ENCODE measurements at regions of chr1 and their contacts with region 1.

Region 1: DNA sequence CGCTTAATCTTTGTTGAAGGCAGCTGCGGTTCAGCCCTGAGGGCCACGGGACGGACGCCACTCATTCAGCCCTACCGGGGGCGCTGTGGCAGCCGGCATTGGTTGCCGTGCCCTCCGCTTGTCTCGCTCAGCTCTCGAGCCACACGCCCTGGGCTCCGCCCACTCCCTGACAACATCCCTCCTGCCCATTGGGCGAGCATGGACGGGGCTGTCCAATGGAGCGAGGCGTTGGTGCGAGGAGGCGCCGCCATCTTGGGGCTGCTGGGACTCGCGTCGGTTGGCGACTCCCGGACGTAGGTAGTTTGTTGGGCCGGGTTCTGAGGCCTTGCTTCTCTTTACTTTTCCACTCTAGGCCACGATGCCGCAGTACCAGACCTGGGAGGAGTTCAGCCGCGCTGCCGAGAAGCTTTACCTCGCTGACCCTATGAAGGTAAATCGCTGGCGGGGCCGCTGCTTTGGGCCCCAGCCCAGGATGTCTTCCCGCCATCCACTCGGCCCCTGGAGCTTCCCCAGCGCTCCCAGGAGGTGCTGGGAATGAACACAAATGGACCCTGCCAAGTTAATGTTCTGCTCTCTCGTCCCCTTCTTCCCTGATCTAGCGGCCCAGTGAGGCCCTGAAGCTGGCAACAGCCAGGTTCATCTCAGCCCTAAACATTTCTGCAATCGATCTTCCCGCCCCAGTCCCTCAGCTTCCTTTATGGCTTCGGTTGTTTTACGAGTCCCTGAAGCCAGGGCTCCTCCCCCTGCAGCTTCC is at the start of gene SRP9:
- DNase-seq: peak; percentile 92 to 98
- ATAC-seq: peak; percentile 99 to 100
- H3K4me3 ChIP-seq: peak within 1 kb of the TSS; percentile 85
- H3K27ac ChIP-seq: peak within 1 kb of the TSS; percentile 93 to 97
- H3K4me1 ChIP-seq: peaks cover 46% of the 10 kb centered on the region
- CTCF ChIP-seq: peak; percentile 82
- EP300 ChIP-seq: no peak
- POLR2A ChIP-seq: no peak; the same call in 1 of the 2 replicates
- RAD21 ChIP-seq: peak; percentile 63 to 71
- polyA plus RNA-seq, gene SRP9: 512 and 629 TPM in 2 replicates

Region 2: DNA sequence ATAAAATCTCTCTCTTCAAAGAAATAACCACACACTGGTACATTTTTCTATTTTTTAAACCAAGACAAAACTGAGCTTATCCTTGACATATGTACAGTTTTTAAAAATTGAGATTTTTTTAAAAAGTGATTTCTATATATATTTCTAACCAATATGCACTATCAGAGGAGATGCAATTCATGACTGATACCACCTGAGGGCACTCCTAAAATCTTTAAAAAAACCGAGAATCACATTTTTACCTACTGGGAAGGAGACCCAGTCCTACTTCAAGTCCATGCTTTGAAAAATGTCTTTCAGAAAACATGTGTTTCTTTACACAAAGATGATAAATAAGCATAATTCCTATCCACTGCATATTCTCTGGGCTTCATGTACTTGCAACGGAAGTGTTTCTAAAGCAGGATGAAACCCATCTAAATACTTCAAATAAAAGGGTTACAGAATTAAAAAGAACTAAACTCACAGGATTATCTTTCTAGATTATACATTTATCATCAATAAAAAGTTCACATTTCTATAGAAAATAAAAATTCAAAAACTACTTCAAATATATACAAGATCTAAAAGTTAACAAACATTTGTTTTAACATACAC is 223.4 kb before region 1 on chr1:
- CTCF ChIA-PET with region 1: interaction called, 86 read pairs
- POLR2A ChIA-PET with region 1: interaction called, 3 read pairs
- DNase-seq: peak; percentile 18 to 32
- ATAC-seq: peak in 1 of 2 experiments; percentile 79; a peak in 4 of 6 replicates
- H3K4me3 ChIP-seq: no peak overlapping the region
- H3K27ac ChIP-seq: no peak overlapping the region
- H3K4me1 ChIP-seq: no peaks in the 10 kb centered on the region
- CTCF ChIP-seq: peak; percentile 77
- EP300 ChIP-seq: no peak
- POLR2A ChIP-seq: no peak
- RAD21 ChIP-seq: peak; percentile 68 to 76

Region 3: DNA sequence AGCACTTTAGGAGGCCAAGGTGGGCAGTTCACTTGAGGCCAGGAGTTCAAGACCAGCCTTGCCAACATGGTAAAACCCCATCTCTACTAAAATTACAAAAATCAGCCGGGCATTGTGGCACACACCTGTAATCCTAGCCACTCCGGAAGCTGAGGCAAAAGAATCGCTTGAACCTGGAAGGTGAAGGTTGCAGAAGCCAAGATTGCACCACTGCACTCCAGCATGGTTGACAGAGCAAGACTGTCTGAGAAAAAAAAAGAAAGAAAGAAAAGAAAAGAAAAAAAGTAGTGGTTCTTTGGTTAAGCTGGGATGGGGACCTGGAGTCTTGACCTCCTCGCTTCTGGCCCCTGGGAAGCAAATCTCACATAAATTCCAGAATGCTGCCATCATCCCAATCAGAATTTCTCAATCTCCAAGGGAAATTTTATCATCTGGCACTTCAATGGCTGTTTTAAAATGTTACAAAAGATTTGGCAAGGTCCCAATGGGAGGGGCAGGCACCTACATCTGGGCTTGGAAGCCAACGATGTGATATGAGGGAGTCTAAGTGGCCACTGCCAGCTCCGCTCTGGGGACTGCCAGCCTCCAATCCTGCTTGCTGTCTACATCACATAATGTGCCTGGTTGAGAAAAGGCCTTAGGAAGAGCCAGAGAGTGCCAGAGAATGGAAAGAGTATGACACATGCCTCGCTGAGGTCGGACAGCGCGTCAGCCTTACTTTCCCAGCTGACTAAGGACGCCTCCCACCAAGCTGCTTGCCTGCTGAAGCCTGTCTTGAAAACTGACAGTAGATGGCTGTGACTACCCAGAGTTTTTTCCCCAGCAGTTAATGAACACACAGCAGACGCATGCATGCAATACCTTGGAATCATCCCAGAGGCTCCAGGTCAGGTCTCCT is 42.3 kb before region 1 on chr1:
- CTCF ChIA-PET with region 1: interaction called, 54 read pairs
- POLR2A ChIA-PET with region 1: interaction called, 12 read pairs
- DNase-seq: peak; percentile 82 to 93
- ATAC-seq: peak; percentile 90 to 94
- H3K4me3 ChIP-seq: no peak overlapping the region
- H3K27ac ChIP-seq: peak overlapping the region; percentile 90 to 94
- H3K4me1 ChIP-seq: peaks cover 60% of the 10 kb centered on the region
- CTCF ChIP-seq: peak; percentile 14; the same call in 2 of the 3 replicates
- EP300 ChIP-seq: peak; percentile 68 to 84; a peak in 3 of 5 replicates
- POLR2A ChIP-seq: no peak
- RAD21 ChIP-seq: peak; percentile 53 to 58; a peak in 4 of 5 replicates

Region 4: DNA sequence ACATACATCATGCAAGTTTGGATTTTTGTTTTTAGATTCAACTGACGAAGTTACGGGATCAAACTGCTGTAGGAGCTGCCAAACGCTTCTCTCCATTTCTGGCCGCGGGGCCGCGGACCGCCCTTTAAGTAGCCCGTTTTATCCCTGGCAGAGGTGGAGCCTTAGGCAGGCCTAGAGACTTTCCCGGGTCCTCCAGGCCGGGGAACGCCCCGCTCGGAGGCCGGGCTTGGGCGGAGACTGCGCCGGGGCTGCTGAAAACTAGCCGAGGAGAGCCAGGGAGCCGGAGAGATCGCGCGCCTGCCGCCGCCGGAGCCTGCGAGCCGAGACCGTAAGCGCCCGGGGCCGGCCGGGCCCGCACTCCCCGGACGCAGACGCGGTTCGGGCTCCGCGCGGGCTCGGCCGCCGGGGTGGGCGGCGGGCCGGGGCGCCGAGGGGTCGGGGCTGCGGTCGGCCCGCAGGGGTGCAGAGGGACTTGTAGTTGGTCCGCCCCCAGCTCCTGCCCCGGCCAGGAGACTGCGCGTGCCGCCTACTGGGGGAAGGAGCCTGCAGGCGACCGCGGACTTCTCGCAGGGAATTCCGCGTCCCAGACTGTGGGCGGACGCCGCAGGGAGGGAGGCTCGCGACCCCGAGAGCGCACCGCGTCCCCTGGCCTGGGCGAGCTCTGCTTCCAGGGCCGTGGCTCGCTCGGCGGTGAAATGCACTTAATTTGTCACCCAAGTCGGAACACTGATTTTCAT is 32.2 kb after region 1 on chr1 and contains the start of gene EPHX1:
- CTCF ChIA-PET with region 1: interaction called, 55 read pairs
- POLR2A ChIA-PET with region 1: interaction called, 58 read pairs
- DNase-seq: peak; percentile 87 to 97
- ATAC-seq: peak; percentile 85 to 86
- H3K4me3 ChIP-seq: peak within 1 kb of the TSS; percentile 86
- H3K27ac ChIP-seq: peak within 1 kb of the TSS; percentile 93 to 99
- H3K4me1 ChIP-seq: peaks cover 40% of the 10 kb centered on the region
- CTCF ChIP-seq: peak; percentile 30; the same call in 2 of the 3 replicates
- EP300 ChIP-seq: 0 out of 5 replicates have a peak, but pooled peaks of 1 of the 2 experiments have one; percentile 8
- POLR2A ChIP-seq: peak; percentile 97
- RAD21 ChIP-seq: peak; percentile 25 to 37; a peak in 3 of 5 replicates
- polyA plus RNA-seq, gene EPHX1: 150 and 212 TPM in 2 replicates

Region 5: DNA sequence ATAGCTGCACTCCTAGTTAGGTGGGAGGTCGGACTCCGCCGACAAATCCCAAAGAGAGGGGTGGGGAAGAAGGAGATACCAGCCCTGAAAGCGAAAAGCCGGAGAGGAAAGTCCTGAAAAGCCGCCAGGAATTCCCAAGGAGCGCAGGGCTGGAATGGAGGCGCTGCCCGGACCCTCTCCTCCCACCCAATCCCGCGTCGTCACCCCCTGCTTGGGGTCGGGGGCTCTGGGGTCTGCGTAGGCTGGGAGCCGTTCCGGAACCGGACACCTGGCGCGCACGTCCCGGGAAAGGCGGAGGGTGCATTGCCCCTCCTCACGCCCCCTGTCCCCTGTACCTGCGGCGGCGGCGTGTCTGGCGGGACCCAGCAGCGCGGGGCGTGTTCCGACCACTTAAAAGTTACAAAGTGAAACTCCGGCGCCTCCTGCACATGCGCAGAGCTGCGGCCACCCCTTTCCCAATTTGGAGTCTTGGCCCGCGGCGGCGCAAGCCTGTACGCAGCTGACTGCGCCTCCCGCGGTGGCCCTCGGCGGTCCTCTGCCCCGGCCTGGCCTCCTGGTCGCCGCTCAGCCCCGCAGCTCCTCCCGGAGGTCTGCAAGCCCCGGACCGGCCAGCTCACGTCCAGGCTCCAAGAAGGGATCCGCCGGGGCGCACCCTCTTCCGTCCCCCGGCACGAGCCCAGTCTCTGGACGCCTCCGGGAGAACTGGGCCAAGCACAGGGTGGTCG is 104.4 kb after region 1 on chr1 and contains the start of gene TMEM63A:
- CTCF ChIA-PET with region 1: interaction called, 8 read pairs
- POLR2A ChIA-PET with region 1: interaction called, 27 read pairs
- DNase-seq: peak; percentile 83 to 92
- ATAC-seq: peak; percentile 82 to 90
- H3K4me3 ChIP-seq: peak within 1 kb of the TSS; percentile 86
- H3K27ac ChIP-seq: peak within 1 kb of the TSS; percentile 88 to 95
- H3K4me1 ChIP-seq: peaks cover 35% of the 10 kb centered on the region
- CTCF ChIP-seq: 0 out of 3 replicates have a peak, but pooled peaks have one; percentile 18
- EP300 ChIP-seq: no peak
- POLR2A ChIP-seq: peak; percentile 79
- RAD21 ChIP-seq: peak in 1 of 2 experiments; percentile 23; a peak in 1 of 5 replicates
- polyA plus RNA-seq, gene TMEM63A: 9.5 and 12.4 TPM in 2 replicates

Measured in A549 (cell line).